ENCODE measurements at regions of chr9 and their contacts with region 1.

Region 1: DNA sequence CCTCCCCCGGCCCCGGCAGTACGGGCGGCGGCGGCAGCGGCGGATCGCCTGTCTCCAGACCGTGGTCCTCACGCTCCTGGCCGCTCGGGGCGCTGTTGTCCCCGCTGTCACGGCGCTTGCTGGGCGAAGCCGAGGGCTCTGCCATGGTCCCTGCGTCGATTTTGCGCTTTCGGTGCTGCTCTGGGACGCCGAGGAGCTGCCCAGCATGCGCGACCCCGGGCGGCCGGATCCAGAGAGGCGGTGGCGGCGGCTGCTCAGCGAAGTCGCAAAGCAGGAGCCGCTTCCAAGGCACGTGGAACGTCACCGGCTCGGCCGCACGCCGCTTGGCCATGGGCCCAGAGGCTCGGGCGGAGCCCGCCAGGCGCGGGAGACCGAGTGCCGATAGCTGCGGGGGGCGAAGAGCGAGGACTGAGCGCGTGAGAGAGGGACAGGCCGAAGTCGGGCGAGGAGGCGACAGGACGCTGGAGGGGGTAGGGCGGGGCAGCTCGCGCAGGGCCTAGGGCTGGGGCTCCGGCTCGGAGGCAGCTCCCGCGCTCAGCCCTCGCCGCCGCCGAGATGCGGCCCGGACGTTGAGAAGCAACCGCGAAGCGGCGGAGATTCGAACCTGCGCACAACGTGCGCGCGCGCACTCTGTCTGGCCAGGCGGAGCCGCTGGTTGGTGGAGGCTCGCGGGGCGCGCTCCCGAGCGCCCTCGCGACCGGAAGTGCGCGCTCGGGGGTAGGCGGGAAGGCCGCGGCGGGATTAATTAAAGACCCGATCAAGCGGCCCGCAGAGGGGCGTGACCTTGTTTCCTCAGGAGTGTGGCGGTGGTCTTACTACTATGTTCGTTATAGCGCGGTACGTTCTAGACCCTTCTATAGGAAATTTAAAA is at the start of gene C9orf40:
- DNase-seq: peak; percentile 97
- H3K4me3 Mint-ChIP-seq: peak within 1 kb of the TSS; percentile 98
- H3K27ac Mint-ChIP-seq: peak within 1 kb of the TSS; percentile 97
- H3K4me1 Mint-ChIP-seq: peaks cover 39% of the 10 kb centered on the region
- H3K27me3 Mint-ChIP-seq: no peaks in the 10 kb centered on the region
- total RNA-seq, gene C9orf40: 19.6 and 20.0 TPM in 2 replicates

Region 2: GRCh38 chr9:74887041-74887980 is 65.2 kb before region 1 on chr9 and contains the start of gene TRPM6:
- intact Hi-C with region 1: loop called (anchors 5 kb)
- DNase-seq: peak; percentile 82
- H3K4me3 Mint-ChIP-seq: peak within 1 kb of the TSS; percentile 92
- H3K27ac Mint-ChIP-seq: no peak within 1 kb of the TSS
- H3K4me1 Mint-ChIP-seq: peaks cover 14% of the 10 kb centered on the region
- H3K27me3 Mint-ChIP-seq: peaks cover 42% of the 10 kb centered on the region
- total RNA-seq, gene TRPM6: 0.05 TPM in 1 of 2 replicates, not detected in the other

Measured in activated CD4-positive, alpha-beta T cell treated with anti-CD3 and anti-CD28 coated beads, Interleukin-2, amount 10 ng/mL, durations not matched to agents 24 days and 14 days (primary cell).